A673 (cell line): ENCODE measurements at regions of chr16 and their contacts with region 1.

Region 1: GRCh38 chr16:66740010-66740409 is 11.4 kb downstream of the DYNC1LI2 start:
- DNase-seq: peak; percentile 68
- H3K4me3 ChIP-seq: no peak overlapping the region
- H3K27ac ChIP-seq: peak overlapping the region; percentile 25
- H3K4me1 ChIP-seq: peaks cover 14% of the 10 kb centered on the region
- H3K27me3 ChIP-seq: no peaks in the 10 kb centered on the region
- CTCF ChIP-seq: peak; percentile 88

Region 2: GRCh38 chr16:66529141-66529874 is 210.7 kb before region 1 on chr16:
- CTCF ChIA-PET with region 1: no interaction called
- POLR2A ChIA-PET with region 1: interaction called, 14 read pairs
- intact Hi-C with region 1: no loop called
- DNase-seq: no peak
- H3K4me3 ChIP-seq: no peak overlapping the region
- H3K27ac ChIP-seq: no peak overlapping the region
- H3K4me1 ChIP-seq: no peaks in the 10 kb centered on the region
- H3K27me3 ChIP-seq: no peaks in the 10 kb centered on the region
- CTCF ChIP-seq: no peak

Region 3: GRCh38 chr16:66714654-66715307 is 25.2 kb before region 1 on chr16:
- CTCF ChIA-PET with region 1: no interaction called
- POLR2A ChIA-PET with region 1: no interaction called
- intact Hi-C with region 1: no loop called
- DNase-seq: peak; percentile 19
- H3K4me3 ChIP-seq: no peak overlapping the region
- H3K27ac ChIP-seq: no peak overlapping the region
- H3K4me1 ChIP-seq: no peaks in the 10 kb centered on the region
- H3K27me3 ChIP-seq: no peaks in the 10 kb centered on the region
- CTCF ChIP-seq: no peak